ENCODE measurements at regions of chr1 and their contacts with region 1.

Region 1: DNA sequence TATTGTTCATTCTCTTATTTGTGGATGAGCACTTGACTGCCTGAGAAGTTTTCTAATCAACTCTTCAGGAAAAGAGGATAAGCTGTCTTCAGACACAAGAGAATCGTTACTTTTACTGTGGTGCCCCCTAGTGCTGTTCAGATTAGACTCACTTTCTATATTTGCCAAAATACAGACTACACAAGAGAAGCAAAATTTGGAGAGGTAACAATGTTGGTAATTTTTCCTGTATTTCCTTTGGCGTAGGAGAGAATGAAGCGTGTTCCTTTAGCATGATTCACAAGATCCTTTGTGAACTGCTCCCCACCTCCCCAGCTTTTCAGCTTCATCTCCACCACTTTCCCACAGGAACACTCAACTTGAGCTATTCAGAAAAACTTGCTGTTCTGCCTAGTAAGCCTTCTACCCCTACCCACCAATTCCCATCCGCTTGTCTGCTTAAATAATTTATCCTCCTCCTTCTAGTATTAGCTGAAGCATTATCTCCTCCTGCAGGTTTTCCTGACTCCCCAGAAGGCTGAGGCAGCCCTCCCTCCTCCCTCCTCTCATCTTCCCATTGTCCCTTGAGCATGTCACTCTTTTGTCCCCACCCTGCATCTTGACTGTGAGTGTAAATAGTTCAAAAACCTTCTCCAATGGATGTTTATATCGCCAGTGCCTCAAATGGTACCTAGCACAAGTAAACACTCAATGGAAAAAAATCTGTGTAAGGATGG is 4.5 kb downstream of the TNFSF4 start:
- DNase-seq: peak in 15 of 42 donors; percentile 15 to 61 (median 36)

Region 2: DNA sequence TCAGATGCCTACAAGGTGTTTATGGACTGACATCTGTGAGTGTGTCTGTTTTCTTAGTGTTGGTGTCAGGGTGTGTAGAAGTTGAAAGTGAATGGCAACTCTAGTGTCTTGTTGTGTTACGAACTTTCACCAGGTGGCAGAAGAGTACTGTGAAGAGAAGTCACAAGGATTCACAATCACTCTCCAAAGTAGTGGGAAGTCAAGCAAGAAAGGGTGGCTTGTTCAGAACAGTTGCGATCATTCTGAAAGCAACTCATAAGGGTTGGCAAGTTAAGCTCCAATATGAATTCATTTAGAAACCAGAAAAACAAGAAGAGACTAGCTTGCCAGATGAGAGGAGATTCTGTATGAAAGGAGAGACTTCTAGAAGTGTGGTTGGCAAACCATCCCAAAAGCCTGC is 457.6 kb before region 1 on chr1:
- intact Hi-C with region 1: loop called (anchors 10 kb)
- DNase-seq: peak in 18 of 42 donors; percentile 8 to 62 (median 38)

Region 3: DNA sequence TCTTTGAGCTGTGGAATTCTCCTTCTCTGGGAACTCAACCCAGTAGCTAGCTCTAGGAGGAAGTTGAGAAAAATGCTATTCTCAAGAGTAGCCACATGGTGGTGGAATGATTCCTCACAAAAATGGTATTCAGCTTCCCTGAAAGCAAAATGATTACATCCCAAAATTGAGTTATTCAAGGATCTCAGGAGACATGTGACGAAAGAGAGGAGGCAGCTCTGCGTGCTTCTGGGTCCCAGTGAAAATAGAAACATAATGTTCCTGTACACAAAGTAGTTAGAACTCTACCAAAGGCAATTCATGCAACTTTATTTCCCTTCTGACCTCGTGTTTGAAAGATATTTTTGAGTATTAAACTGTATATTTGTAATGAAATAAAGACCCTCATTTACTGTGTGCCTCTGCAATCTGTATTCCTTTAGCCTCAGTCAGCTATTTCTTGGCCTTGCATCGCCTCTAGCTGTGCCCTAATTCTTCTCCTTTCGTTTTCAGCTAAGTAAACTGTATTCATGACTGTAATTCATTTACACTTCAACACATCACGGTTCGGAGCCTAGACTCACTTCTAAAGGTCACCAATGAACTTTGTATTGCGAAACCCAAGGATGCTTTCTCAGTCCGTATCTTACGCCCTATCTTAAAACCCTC is 376.4 kb before region 1 on chr1:
- intact Hi-C with region 1: loop called (anchors 10 kb)
- DNase-seq: peak in 11 of 42 donors; percentile 4 to 42 (median 19)